ENCODE measurements at regions of chr5 and their contacts with region 1.

Region 1: GRCh38 chr5:56200856-56201666 is 32.1 kb downstream of the ANKRD55 start:
- DNase-seq: peak; percentile 90
- ATAC-seq: peak; percentile 100
- H3K4me3 ChIP-seq: no peak overlapping the region
- H3K27ac ChIP-seq: no peak overlapping the region
- H3K4me1 ChIP-seq: no peaks in the 10 kb centered on the region
- H3K27me3 ChIP-seq: no peaks in the 10 kb centered on the region
- CTCF ChIP-seq: peak; percentile 74 to 93 (median 78); a peak in 5 of 6 replicates
- EP300 ChIP-seq: no peak
- POLR2A ChIP-seq: no peak
- RAD21 ChIP-seq: peak; percentile 95

Region 2: GRCh38 chr5:55936100-55936693 is 264.9 kb before region 1 on chr5:
- CTCF ChIA-PET with region 1: interaction called, 114 read pairs
- POLR2A ChIA-PET with region 1: interaction called, 4 read pairs
- RAD21 ChIA-PET with region 1: interaction called, 90 read pairs
- SMC1A ChIA-PET with region 1: interaction called, 123 read pairs
- in situ Hi-C with region 1: no loop called
- intact Hi-C with region 1: loop called (anchors 1 kb)
- DNase-seq: no peak
- ATAC-seq: peak; percentile 81
- H3K4me3 ChIP-seq: no peak overlapping the region
- H3K27ac ChIP-seq: no peak overlapping the region
- H3K4me1 ChIP-seq: no peaks in the 10 kb centered on the region
- H3K27me3 ChIP-seq: no peaks in the 10 kb centered on the region
- CTCF ChIP-seq: peak; percentile 83 to 94 (median 87)
- EP300 ChIP-seq: no peak
- POLR2A ChIP-seq: no peak
- RAD21 ChIP-seq: peak; percentile 92

Region 3: DNA sequence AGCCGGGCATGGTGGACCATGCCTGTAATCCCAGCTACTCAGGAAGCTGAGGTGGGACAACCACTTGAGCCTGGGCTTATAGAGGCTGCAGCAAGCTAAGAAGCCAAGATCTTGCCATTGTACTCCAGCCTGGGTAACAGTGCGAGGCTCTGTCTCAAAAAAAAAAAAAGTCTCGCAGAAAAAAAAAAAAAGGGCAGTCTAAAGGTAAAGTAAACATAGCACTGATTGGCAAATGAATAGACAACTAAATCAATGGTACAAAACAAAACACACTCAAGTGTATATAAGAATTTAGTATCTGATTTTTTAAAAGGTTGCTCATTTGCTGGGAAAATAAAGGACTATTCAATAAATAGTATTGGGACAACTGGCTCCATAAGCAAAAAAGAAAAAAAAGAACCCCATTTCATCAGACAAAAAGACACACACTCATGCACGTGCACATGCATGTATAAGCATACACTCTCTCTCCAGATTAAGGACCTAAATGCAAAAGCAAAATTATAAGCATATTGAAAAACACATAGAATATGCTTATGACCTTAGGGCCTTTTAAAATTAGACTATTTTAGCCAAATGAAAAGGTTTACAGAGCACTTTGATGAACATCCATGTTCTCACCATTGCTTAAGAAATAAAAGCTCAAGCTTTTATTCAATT is 212.0 kb before region 1 on chr5:
- CTCF ChIA-PET with region 1: interaction called, 122 read pairs
- POLR2A ChIA-PET with region 1: interaction called, 6 read pairs
- RAD21 ChIA-PET with region 1: interaction called, 79 read pairs
- SMC1A ChIA-PET with region 1: interaction called, 110 read pairs
- in situ Hi-C with region 1: no loop called
- intact Hi-C with region 1: no loop called
- DNase-seq: no peak
- ATAC-seq: peak; percentile 18
- H3K4me3 ChIP-seq: peak overlapping the region; percentile 31
- H3K27ac ChIP-seq: no peak overlapping the region
- H3K4me1 ChIP-seq: no peaks in the 10 kb centered on the region; the same call in 1 of the 2 replicates
- H3K27me3 ChIP-seq: no peaks in the 10 kb centered on the region
- CTCF ChIP-seq: no peak
- EP300 ChIP-seq: no peak
- POLR2A ChIP-seq: no peak
- RAD21 ChIP-seq: no peak

Region 4: DNA sequence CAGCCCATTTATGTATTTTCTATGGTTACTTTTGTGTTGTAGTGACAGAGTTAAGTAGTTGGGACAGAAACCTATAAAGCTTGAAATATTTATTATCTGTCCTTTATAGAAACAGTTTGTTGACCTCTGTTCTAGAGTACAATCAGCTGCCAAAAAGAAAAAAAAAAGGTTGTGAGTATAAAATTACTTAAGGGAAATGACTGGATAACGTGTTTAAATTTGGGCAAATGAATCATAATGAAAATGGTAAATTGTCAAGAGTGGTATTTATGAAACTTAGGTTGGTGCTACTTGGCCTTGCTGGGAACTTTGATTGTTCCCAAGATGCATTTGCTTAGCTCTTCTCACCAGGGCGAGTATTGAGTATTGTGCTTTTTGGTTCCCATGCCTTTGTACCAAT is 136.1 kb before region 1 on chr5:
- CTCF ChIA-PET with region 1: interaction called, 25 read pairs
- POLR2A ChIA-PET with region 1: no interaction called
- RAD21 ChIA-PET with region 1: interaction called, 7 read pairs
- SMC1A ChIA-PET with region 1: interaction called, 12 read pairs
- in situ Hi-C with region 1: no loop called
- intact Hi-C with region 1: loop called (anchors 2 kb)
- DNase-seq: peak; percentile 95
- ATAC-seq: peak; percentile 68
- H3K4me3 ChIP-seq: no peak overlapping the region
- H3K27ac ChIP-seq: peak overlapping the region; percentile 28
- H3K4me1 ChIP-seq: peaks cover 16% of the 10 kb centered on the region
- H3K27me3 ChIP-seq: no peaks in the 10 kb centered on the region
- CTCF ChIP-seq: no peak
- EP300 ChIP-seq: peak in 1 of 2 experiments; percentile 91; a peak in 2 of 4 replicates
- POLR2A ChIP-seq: no peak
- RAD21 ChIP-seq: no peak

Region 5: DNA sequence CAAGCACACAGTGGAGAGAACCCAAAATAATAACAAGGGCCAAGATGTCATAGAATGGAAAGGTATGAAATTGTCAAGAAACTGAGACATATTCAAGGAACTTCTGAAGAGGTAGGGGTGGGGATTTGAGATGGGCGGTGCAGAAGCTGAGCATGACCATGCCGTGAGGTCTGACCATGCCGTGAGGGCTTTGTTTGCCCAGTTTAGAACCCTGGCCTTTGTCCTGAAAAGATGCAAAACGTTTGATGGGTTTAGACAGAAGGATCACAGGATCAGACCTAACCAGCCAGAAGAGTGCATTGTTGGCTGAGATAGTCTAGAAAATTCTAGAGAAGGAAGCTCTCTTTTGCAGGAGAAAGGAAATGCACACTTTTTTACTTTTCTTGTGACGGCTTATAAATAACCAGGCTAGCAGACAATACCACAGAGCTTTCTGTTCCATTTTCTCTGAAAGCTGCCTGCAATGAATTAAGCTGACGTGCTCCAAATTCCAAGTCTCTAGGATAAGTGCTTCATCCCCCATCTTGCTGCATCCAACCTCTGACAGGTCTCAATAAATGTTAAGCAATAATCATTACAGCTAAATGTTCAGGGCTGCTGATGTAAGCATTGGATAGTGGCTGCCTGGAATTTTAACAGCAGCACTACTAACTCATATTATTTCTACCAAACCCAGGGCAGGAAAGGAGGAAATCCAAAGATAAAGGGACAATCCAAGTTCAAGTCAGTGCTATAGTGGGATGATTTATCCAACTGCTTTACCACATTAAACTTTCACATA is 95.4 kb before region 1 on chr5:
- CTCF ChIA-PET with region 1: interaction called, 3 read pairs
- POLR2A ChIA-PET with region 1: no interaction called
- RAD21 ChIA-PET with region 1: interaction called, 5 read pairs
- SMC1A ChIA-PET with region 1: interaction called, 18 read pairs
- in situ Hi-C with region 1: no loop called
- intact Hi-C with region 1: no loop called
- DNase-seq: no peak
- ATAC-seq: peak; percentile 78
- H3K4me3 ChIP-seq: no peak overlapping the region; the same call in 1 of the 2 replicates
- H3K27ac ChIP-seq: no peak overlapping the region
- H3K4me1 ChIP-seq: peaks cover 3% of the 10 kb centered on the region; the same call in 1 of the 2 replicates
- H3K27me3 ChIP-seq: no peaks in the 10 kb centered on the region; a peak in 1 of 4 replicates
- CTCF ChIP-seq: no peak
- EP300 ChIP-seq: 0 out of 4 replicates have a peak, but pooled peaks of 1 of the 2 experiments have one; percentile 16
- POLR2A ChIP-seq: no peak
- RAD21 ChIP-seq: no peak

Region 6: DNA sequence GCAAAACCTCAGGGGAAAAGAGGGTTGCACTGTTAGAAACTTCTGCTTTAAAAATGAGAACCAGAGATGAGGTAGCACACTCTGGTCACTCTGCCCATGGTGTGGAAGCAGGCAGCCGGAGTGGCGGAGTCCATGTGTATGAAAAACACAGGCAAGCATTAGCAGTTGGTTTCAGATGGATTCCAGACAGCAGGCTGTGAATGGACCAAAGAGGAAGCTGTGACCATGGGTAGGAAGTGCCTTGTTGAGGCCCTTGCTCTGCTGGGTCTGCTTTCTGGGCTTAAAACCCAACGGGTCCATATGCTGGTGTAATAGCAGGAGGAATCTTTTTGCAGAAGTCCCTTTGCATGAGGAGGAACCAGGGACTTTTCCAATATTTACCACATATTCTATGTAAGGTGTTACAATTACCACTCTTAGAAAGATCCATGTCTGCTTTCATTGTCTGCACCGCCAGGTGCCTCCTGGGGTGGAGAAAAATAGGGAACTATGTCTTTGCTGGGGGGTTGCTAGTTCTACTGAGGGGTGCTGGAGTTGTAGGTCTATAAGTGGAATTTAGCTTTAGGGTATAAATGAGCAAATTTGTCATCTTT is 45.0 kb before region 1 on chr5:
- CTCF ChIA-PET with region 1: interaction called, 3 read pairs
- POLR2A ChIA-PET with region 1: interaction called, 11 read pairs
- RAD21 ChIA-PET with region 1: interaction called, 41 read pairs
- SMC1A ChIA-PET with region 1: interaction called, 12 read pairs
- in situ Hi-C with region 1: no loop called
- intact Hi-C with region 1: loop called (anchors 2 kb)
- DNase-seq: no peak
- ATAC-seq: peak; percentile 49
- H3K4me3 ChIP-seq: no peak overlapping the region
- H3K27ac ChIP-seq: peak overlapping the region; percentile 36
- H3K4me1 ChIP-seq: peaks cover 26% of the 10 kb centered on the region
- H3K27me3 ChIP-seq: no peaks in the 10 kb centered on the region
- CTCF ChIP-seq: no peak
- EP300 ChIP-seq: peak in 1 of 2 experiments; percentile 21; a peak in 2 of 4 replicates
- POLR2A ChIP-seq: no peak
- RAD21 ChIP-seq: no peak

Region 7: DNA sequence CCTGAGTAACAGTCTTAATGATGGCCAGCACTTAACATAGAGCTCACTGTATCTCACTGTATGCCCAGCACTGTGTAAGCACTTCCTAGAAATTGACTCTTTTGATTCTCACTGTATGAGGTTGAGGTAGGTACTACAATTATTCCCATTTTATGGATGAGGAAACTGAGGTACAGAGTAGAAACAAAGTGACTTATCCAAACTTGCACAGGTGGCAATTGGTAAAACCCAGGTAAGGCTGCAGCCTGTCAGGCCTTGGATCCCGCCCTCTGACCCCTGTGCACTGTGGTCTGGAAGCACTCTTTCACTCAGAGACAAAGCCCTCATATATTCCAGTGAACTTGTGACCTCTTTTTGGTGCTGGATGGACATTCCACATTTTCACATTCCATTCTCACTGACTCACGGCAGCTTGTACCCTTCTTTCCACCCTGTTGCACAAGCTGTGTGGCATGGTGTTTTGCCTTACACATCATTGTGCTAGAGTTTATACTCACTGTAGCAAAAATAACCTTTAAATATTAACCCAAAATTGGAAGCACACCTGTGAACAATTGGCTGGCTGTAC is 10.3 kb after region 1 on chr5:
- CTCF ChIA-PET with region 1: no interaction called
- POLR2A ChIA-PET with region 1: no interaction called
- RAD21 ChIA-PET with region 1: no interaction called
- SMC1A ChIA-PET with region 1: no interaction called
- in situ Hi-C with region 1: no loop called
- intact Hi-C with region 1: no loop called
- DNase-seq: no peak
- ATAC-seq: no peak
- H3K4me3 ChIP-seq: no peak overlapping the region
- H3K27ac ChIP-seq: no peak overlapping the region
- H3K4me1 ChIP-seq: no peaks in the 10 kb centered on the region
- H3K27me3 ChIP-seq: no peaks in the 10 kb centered on the region
- CTCF ChIP-seq: no peak
- EP300 ChIP-seq: no peak
- POLR2A ChIP-seq: no peak
- RAD21 ChIP-seq: no peak